PC-9 (cell line): ENCODE measurements at regions of chr9 and their contacts with region 1.

Region 1: GRCh38 chr9:109574068-109574882 is 76.2 kb upstream of the PTPN3 start:
- DNase-seq: peak in 1 of 2 experiments; percentile 45
- H3K4me3 ChIP-seq: no peak overlapping the region
- H3K27ac ChIP-seq: no peak overlapping the region
- H3K4me1 ChIP-seq: no peaks in the 10 kb centered on the region
- H3K27me3 ChIP-seq: no peaks in the 10 kb centered on the region
- CTCF ChIP-seq: peak; percentile 89

Region 2: GRCh38 chr9:108834959-108835696 is 739.1 kb before region 1 on chr9:
- CTCF ChIA-PET with region 1: no interaction called
- POLR2A ChIA-PET with region 1: no interaction called
- intact Hi-C with region 1: no loop called
- DNase-seq: no peak
- H3K4me3 ChIP-seq: no peak overlapping the region
- H3K27ac ChIP-seq: no peak overlapping the region
- H3K4me1 ChIP-seq: peaks cover 19% of the 10 kb centered on the region
- H3K27me3 ChIP-seq: no peaks in the 10 kb centered on the region
- CTCF ChIP-seq: no peak

Region 3: GRCh38 chr9:109182940-109183798 is 391.1 kb before region 1 on chr9:
- CTCF ChIA-PET with region 1: interaction called, 13 read pairs
- POLR2A ChIA-PET with region 1: no interaction called
- intact Hi-C with region 1: no loop called
- DNase-seq: peak; percentile 47 to 54
- H3K4me3 ChIP-seq: no peak overlapping the region
- H3K27ac ChIP-seq: no peak overlapping the region
- H3K4me1 ChIP-seq: no peaks in the 10 kb centered on the region
- H3K27me3 ChIP-seq: no peaks in the 10 kb centered on the region
- CTCF ChIP-seq: peak; percentile 75

Region 4: GRCh38 chr9:109520478-109521132 is 53.7 kb before region 1 on chr9:
- CTCF ChIA-PET with region 1: no interaction called
- POLR2A ChIA-PET with region 1: no interaction called
- intact Hi-C with region 1: no loop called
- DNase-seq: peak; percentile 71 to 91
- H3K4me3 ChIP-seq: no peak overlapping the region
- H3K27ac ChIP-seq: peak overlapping the region; percentile 61
- H3K4me1 ChIP-seq: peaks cover 46% of the 10 kb centered on the region
- H3K27me3 ChIP-seq: no peaks in the 10 kb centered on the region
- CTCF ChIP-seq: peak; percentile 95

Region 5: GRCh38 chr9:109556061-109556460 is 18.2 kb before region 1 on chr9:
- CTCF ChIA-PET with region 1: no interaction called
- POLR2A ChIA-PET with region 1: no interaction called
- intact Hi-C with region 1: no loop called
- DNase-seq: peak; percentile 86 to 99
- H3K4me3 ChIP-seq: no peak overlapping the region; the same call in 1 of the 2 replicates
- H3K27ac ChIP-seq: peak overlapping the region; percentile 97
- H3K4me1 ChIP-seq: peaks cover 55% of the 10 kb centered on the region
- H3K27me3 ChIP-seq: no peaks in the 10 kb centered on the region
- CTCF ChIP-seq: no peak

Region 6: GRCh38 chr9:109652964-109653363 is 78.7 kb after region 1 on chr9:
- CTCF ChIA-PET with region 1: no interaction called
- POLR2A ChIA-PET with region 1: no interaction called
- intact Hi-C with region 1: loop called (anchors 1 kb)
- DNase-seq: peak; percentile 43 to 59
- H3K4me3 ChIP-seq: no peak overlapping the region
- H3K27ac ChIP-seq: no peak overlapping the region
- H3K4me1 ChIP-seq: peaks cover 18% of the 10 kb centered on the region
- H3K27me3 ChIP-seq: no peaks in the 10 kb centered on the region
- CTCF ChIP-seq: peak; percentile 68

Region 7: DNA sequence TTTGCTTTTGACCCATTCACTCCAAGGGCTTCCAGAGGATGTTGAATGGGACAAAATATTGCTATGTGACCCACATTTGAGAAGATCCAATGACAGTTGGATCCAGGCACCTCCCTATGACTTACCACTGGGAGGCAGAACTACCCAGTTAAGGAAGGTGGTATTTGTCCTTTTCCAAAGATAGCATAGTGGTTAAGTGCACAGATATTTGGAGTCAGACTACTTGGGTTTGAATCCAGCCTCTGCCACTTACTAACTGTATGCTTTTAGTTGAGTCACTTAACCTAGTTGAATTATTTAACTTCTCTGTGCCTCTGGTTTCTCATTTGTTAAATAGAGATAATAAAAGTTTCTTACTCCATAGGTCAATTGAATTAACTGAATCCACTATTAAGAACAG is 131.2 kb after region 1 on chr9:
- CTCF ChIA-PET with region 1: no interaction called
- POLR2A ChIA-PET with region 1: no interaction called
- intact Hi-C with region 1: no loop called
- DNase-seq: no peak
- H3K4me3 ChIP-seq: no peak overlapping the region
- H3K27ac ChIP-seq: no peak overlapping the region
- H3K4me1 ChIP-seq: 0 out of 2 replicates have a peak, but pooled peaks cover 6% of the 10 kb centered on the region
- H3K27me3 ChIP-seq: no peaks in the 10 kb centered on the region
- CTCF ChIP-seq: no peak

Region 8: DNA sequence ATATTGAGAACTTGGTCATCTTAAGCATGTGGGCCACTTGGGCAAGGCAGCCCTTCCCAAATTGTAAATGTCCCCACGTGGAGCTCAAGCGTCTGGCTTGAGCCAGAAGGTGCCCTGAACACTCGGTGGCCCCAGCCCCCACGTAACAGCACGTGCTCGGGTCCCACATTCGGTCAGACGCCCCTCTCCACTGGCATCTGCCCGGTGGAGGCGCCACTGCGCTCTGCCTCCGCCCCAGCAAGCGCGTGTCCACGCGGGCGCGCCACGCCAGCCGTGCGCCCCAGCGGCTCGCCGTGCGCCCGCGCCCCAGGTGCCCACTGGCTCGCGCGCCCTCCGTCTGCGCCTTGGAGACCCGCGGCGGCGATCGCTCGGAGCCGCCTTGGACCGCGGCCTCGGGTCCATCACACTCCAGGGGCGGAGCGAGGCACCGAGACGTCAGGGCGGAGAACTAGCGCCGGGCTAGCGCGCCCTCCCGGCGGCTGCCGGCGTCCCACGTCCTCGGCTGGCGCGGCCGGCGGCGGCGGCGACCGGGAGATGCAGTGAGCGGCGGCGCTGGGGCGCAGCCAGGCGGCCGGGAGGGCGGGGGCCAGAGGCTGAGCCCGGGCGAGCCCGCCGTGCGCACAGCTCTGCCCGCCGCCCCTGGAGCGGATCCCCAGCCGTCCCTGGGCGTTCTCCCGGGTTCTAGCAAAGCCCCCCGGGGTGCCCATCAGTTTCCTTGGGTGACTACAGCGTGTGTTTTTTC is 205.6 kb after region 1 on chr9 and contains the start of gene PALM2AKAP2:
- CTCF ChIA-PET with region 1: no interaction called
- POLR2A ChIA-PET with region 1: no interaction called
- intact Hi-C with region 1: loop called (anchors 1 kb)
- DNase-seq: peak; percentile 40 to 76
- H3K4me3 ChIP-seq: peak within 1 kb of the TSS; percentile 89
- H3K27ac ChIP-seq: peak within 1 kb of the TSS; percentile 5; the same call in 1 of the 2 replicates
- H3K4me1 ChIP-seq: peaks cover 11% of the 10 kb centered on the region
- H3K27me3 ChIP-seq: no peaks in the 10 kb centered on the region
- CTCF ChIP-seq: no peak
- total RNA-seq, gene PALM2AKAP2: 2.1 and 3.1 TPM in 2 replicates

Region 9: DNA sequence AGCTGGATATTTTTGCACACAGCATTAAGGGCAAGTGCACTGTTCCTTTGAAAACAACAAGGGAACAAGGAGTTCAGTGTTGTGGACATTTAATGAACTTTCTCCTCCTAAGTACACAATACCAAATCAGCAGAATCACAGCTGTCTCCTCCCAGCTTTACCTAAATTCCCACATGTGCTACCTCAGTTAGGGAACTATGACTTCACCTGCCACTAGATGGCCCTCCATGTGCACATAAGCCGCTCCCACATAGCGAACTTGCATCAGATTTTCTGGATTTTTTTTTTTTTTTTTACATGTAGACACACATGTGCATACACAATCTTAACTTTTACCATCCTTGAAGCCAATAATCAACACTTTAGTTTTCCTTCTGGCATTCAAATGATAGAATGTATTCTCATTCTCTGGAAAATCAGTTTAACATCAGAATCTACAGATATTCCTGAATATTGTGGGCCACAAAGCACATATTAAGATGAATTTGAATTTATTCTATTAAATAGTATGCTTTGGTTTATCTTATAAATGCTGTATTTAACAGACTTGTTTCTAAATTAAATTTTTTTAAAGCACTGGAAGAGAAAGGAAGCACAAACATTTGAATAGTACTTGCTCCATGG is 329.4 kb after region 1 on chr9:
- CTCF ChIA-PET with region 1: no interaction called
- POLR2A ChIA-PET with region 1: interaction called, 6 read pairs
- intact Hi-C with region 1: loop called (anchors 1 kb)
- DNase-seq: peak; percentile 68 to 70
- H3K4me3 ChIP-seq: no peak overlapping the region
- H3K27ac ChIP-seq: no peak overlapping the region
- H3K4me1 ChIP-seq: 0 out of 2 replicates have a peak, but pooled peaks cover 3% of the 10 kb centered on the region
- H3K27me3 ChIP-seq: no peaks in the 10 kb centered on the region
- CTCF ChIP-seq: peak; percentile 91

Region 10: DNA sequence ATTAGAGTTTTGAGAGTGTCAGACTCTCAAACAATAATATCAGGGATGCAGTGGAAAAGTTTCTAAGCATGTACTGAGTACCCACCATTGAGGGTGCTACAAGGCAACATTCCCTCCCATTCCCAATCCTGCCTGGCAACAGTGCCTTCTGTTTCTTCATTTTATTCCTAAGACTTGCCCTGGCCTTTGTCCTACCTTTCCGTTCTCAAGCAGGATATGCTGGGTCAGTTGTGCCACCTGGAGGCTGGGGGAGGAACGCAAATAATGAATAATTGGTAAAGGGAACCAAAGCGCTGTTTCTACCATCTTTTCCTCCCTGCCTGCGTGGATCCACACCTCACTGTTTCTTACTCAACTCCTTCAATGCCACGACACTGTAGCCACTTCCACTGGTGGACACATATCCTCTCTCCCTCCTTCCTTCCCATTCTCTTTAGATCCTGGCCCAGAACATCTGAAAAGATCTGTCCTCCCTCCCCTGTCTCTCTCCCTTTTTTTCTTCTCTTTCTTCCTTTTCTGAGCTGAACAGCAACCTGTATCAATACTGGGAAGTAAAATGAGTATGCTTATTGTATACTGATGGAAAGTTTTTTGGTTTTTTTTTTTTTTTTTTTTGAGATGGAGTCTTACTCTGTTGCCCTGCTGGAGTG is 484.2 kb after region 1 on chr9:
- CTCF ChIA-PET with region 1: no interaction called
- POLR2A ChIA-PET with region 1: no interaction called
- intact Hi-C with region 1: loop called (anchors 1 kb)
- DNase-seq: peak; percentile 54 to 67
- H3K4me3 ChIP-seq: no peak overlapping the region
- H3K27ac ChIP-seq: peak overlapping the region; percentile 8; the same call in 1 of the 2 replicates
- H3K4me1 ChIP-seq: peaks cover 7% of the 10 kb centered on the region
- H3K27me3 ChIP-seq: no peaks in the 10 kb centered on the region
- CTCF ChIP-seq: peak; percentile 77

Region 11: DNA sequence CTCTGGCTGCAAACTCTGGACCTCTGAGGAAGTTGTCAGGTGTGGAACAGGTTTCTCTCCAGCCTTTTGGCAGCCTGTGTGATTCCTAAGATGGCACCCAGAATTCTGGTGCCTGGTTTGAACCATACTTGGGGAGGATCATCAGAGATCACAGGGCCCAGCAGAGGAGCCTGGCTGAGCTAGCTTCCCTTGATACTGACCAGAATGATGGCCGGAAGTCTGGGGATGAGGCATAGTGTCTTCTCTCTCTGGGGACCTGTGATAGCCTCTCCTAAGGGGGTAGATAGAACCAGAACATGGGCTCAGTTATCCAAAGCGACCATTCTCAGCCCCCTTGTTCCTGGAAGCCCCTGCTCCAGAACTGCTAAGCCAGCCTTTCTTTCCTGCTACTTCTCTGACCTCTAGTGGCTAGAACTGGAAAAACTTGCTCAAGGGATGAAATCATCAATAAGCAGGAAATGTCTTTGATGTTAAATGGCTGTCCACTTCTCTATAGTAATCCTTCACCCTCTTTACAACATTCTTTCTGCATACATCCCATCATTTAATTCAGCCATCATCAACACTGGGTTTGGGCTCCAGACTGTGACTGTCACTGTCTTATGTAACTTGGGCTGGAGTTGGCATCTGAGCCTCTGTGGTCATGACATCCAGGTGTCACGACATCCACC is 578.6 kb after region 1 on chr9:
- CTCF ChIA-PET with region 1: no interaction called
- POLR2A ChIA-PET with region 1: no interaction called
- intact Hi-C with region 1: loop called (anchors 2 kb)
- DNase-seq: peak in 1 of 2 experiments; percentile 56
- H3K4me3 ChIP-seq: no peak overlapping the region
- H3K27ac ChIP-seq: 0 out of 2 replicates have a peak overlapping the region, but pooled peaks have one; percentile 22
- H3K4me1 ChIP-seq: peaks cover 8% of the 10 kb centered on the region
- H3K27me3 ChIP-seq: no peaks in the 10 kb centered on the region
- CTCF ChIP-seq: peak; percentile 91